Posterior vena cava (tissue), 2 donors: ENCODE measurements at regions of chr14 and their contacts with region 1.

Region 1: DNA sequence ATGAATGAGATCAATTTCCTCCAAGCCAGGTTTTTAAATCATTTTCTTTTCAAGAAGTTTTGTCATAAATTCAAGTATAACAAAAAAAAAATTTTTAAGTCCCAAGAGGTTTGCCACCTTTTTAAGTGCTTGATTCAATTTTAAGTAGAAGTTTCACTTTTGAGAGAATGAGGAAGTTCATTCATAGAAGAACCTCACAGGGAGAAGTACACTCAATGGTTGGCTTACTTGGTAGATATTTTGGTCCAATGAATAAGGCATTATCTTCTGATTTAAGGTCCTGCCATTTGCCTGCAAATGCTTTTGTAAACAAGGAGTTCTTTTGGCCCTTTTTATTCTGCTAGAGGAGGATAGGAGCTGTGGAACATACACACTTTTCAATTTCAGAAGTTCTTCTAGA is 96.7 kb upstream of the NOVA1 start:
- DNase-seq: no peak

Region 2: GRCh38 chr14:26730929-26731618 is 36.6 kb after region 1 on chr14:
- intact Hi-C with region 1: no loop called
- DNase-seq: no peak

Region 3: DNA sequence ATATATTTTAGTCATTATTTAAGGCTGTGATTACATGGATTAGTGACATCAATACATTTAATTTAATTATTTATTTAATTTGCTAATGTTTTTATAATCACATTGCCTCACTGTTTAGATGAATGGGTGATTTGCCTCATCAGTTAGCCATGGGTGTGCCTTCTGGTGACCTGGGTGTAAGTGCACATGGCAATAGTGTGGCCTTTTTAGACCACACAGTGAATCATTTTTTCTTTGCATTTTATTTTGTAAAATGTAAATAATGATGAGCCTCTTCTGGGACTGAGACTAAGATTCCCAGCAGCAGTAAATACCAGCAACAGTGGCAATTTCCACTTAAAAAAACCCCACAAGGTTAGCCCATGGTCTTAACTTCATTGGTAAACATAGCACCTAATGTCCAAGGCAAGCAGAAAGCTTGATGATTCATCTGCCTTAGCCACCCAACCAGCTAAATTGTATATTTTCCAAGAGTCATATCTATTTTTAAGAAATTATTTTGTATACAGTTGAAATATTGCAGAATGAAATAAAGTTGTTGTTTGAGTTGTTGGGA is 139.2 kb after region 1 on chr14:
- intact Hi-C with region 1: no loop called
- DNase-seq: no peak

Region 4: GRCh38 chr14:27114180-27114579 is 419.7 kb after region 1 on chr14:
- intact Hi-C with region 1: loop called in 1 of 2 experiments (anchors 5 kb)
- DNase-seq: no peak